Activated T-helper 2 cell treated with anti-CD3 and anti-CD28 coated beads, Interferon-gamma antibody, Interleukin-2, Interleukin-4, amounts not matched to agents 10 μg/mL and 5 μg/mL and 100 μg/mL, durations not matched to agents 14 hours and 24 hours and 36 hours (primary cell): ENCODE measurements at regions of chr7 and their contacts with region 1.

Region 1: DNA sequence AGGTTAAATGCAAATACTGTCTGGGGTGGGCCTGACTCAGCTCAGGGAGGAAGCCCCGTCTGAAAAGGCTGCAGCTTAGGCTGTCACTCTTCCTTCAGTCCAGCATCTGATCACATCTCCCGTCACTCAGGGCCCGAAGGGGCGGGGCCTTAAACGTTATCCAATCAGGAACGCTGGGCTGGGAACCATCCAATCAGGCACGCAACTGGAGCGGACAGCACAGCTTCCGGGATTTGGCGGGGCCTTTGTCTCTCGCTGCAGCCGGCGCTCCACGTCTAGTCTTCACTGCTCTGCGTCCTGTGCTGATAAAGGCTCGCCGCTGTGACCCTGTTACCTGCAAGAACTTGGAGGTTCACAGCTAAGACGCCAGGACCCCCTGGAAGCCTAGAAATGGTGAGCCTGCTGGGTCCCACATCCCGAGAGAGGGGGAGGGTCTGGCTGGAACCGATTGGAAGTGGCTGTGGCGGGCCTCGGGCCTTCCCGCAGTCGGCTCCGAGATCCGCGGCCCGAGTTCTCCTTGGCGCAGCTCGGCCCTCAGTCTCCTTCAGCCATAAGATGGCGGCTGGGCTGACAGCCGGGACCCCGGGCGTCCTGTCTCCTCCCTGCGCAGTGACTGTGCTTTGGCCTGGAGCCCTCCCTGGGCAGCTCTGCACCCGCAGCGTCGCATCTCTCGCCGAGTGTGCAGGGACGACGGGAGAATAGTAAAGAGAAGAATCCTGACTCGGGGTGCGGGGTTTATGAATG is at the start of gene ZNF92:
- DNase-seq: peak; percentile 95
- H3K4me3 Mint-ChIP-seq: peak within 1 kb of the TSS; percentile 99
- H3K27ac Mint-ChIP-seq: peak within 1 kb of the TSS; percentile 93
- H3K4me1 Mint-ChIP-seq: peaks cover 17% of the 10 kb centered on the region
- H3K27me3 Mint-ChIP-seq: no peaks in the 10 kb centered on the region
- total RNA-seq, gene ZNF92: 15.2 and 17.0 TPM in 2 replicates

Region 2: GRCh38 chr7:64307254-64308015 is 1066.3 kb before region 1 on chr7:
- intact Hi-C with region 1: loop called (anchors 5 kb)
- DNase-seq: peak; percentile 92
- H3K4me3 Mint-ChIP-seq: peak overlapping the region; percentile 97
- H3K27ac Mint-ChIP-seq: peak overlapping the region; percentile 91
- H3K4me1 Mint-ChIP-seq: peaks cover 12% of the 10 kb centered on the region
- H3K27me3 Mint-ChIP-seq: no peaks in the 10 kb centered on the region

Region 3: DNA sequence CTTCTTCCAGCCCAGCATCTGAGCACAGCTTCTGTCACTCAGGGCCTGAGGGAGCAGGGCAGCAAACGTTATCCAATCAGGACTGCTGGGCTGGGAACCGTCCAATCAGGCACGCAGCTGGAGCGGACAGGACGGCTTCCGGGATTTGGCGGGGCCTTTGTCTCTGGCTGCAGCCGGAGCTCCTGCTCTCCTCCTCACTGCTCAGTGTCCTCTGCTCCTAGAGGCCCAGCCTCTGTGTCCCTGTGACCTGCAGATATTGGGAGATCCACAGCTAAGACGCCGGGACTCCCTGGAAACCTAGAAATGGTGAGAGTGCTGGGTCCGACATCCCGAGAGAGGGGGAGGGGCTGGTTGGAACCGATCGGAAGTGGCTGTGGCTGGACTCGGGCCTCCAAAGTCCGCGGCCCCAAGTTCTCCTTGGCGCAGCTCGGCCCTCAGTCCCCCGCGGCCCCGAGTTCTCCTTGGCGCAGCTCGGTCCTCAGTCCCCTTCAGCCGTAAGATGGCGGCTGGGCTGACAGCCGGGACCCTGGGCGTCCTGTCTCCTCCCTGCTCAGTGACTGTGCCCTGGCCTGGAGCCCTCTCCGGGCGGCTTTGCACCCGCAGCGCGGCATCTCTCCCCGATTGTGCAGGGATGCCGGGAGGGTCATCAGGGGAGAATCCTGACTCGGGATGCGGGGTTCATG is 707.7 kb before region 1 on chr7 and contains the start of gene ZNF107:
- intact Hi-C with region 1: loop called (anchors 10 kb)
- DNase-seq: peak; percentile 83
- H3K4me3 Mint-ChIP-seq: peak within 1 kb of the TSS; percentile 97
- H3K27ac Mint-ChIP-seq: peak within 1 kb of the TSS; percentile 92
- H3K4me1 Mint-ChIP-seq: peaks cover 11% of the 10 kb centered on the region
- H3K27me3 Mint-ChIP-seq: no peaks in the 10 kb centered on the region
- total RNA-seq, gene ZNF107: 12.8 and 13.1 TPM in 2 replicates

Region 4: DNA sequence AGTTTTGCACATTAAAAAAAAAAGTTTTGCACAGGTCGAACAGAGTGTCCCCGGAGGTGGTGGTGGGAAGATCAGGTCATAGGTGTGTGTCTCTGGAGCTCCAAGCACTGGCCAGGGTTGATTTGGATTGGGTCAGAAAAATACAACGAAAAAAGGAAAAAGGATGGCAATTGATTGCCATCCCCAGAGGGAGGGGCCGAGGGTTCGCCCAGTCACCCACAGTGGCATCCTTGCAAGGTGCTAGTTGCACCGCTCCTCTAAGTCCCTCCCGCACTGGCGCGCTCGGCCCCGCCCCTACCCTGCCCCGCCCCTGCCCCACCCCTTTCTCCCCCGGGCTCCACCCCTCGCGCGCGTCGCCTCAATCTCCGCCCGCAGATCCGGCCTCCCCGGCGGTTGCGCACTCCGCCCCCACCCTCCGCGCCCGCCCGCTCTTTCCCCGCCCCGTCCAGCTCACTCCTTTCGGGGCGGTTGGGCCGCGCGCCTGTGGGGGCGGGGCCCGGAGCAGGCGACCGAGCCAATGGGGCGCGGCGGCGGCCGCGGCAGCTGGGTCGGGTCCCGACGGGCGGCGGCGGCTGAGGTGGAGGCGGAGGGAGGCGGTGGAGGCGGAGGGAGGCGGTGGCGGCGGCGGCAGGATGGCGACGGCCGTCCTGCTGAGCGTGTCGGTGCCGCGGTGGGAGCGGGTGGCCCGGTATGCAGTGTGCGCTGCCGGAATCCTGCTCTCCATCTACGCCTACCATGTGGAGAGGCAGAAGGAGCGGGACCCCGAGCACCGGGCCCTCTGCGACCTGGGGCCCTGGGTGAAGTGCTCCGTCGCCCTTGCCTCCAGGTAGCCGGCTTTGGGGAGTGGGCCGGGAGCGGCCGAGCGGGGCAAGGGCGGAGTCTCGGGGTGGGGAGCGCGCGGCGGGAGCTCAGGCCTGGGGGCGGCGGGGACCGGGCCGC is 335.8 kb before region 1 on chr7:
- intact Hi-C with region 1: loop called (anchors 5 kb)
- DNase-seq: peak; percentile 85
- H3K4me3 Mint-ChIP-seq: peak overlapping the region; percentile 74
- H3K27ac Mint-ChIP-seq: peak overlapping the region; percentile 70
- H3K4me1 Mint-ChIP-seq: peaks cover 16% of the 10 kb centered on the region
- H3K27me3 Mint-ChIP-seq: no peaks in the 10 kb centered on the region

Region 5: DNA sequence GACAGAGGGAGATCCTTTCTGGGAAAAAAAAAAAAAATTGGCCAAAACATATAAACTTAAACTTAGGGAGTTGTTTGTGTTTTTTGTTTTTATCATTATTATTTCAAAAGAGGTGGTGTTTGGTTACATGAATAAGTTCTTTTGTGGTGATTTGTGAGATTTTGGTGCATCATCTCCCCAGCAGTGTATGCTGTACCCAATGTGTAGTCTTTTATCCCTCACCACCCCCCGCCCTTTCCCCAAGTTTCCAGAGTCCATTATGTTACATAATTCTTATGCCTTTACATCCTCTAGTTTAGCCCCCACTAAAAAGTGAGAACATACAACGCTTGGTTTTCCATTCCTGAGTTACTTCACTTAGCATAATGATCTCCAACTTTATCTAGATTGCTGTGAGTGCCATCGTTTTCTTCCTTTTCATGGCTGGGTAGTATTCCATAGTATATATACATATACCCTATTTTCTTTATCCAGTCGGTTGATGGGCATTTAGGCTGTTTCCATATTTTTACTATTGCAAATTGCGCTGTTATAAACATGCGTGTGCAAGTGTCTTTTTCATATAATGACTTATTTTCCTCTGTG is 148.3 kb before region 1 on chr7:
- intact Hi-C with region 1: loop called (anchors 10 kb)
- DNase-seq: no peak
- H3K4me3 Mint-ChIP-seq: no peak overlapping the region
- H3K27ac Mint-ChIP-seq: no peak overlapping the region
- H3K4me1 Mint-ChIP-seq: no peaks in the 10 kb centered on the region
- H3K27me3 Mint-ChIP-seq: no peaks in the 10 kb centered on the region

Region 6: GRCh38 chr7:65325793-65326432 is 47.9 kb before region 1 on chr7:
- intact Hi-C with region 1: no loop called
- DNase-seq: no peak
- H3K4me3 Mint-ChIP-seq: no peak overlapping the region
- H3K27ac Mint-ChIP-seq: no peak overlapping the region
- H3K4me1 Mint-ChIP-seq: no peaks in the 10 kb centered on the region
- H3K27me3 Mint-ChIP-seq: peaks cover under 1% of the 10 kb centered on the region

Region 7: GRCh38 chr7:65981965-65982792 is 608.4 kb after region 1 on chr7 and contains the start of gene GUSB:
- intact Hi-C with region 1: loop called (anchors 5 kb)
- DNase-seq: peak; percentile 86
- H3K4me3 Mint-ChIP-seq: peak within 1 kb of the TSS; percentile 86
- H3K27ac Mint-ChIP-seq: peak within 1 kb of the TSS; percentile 94
- H3K4me1 Mint-ChIP-seq: peaks cover 7% of the 10 kb centered on the region
- H3K27me3 Mint-ChIP-seq: no peaks in the 10 kb centered on the region
- total RNA-seq, gene GUSB: 62.5 and 68.2 TPM in 2 replicates